Mammary epithelial cell (primary cell): ENCODE measurements at regions of chr12 and their contacts with region 1.

Region 1: GRCh38 chr12:66693901-66694675 is 15.2 kb upstream of the GRIP1 start:
- DNase-seq: peak; percentile 49
- H3K4me3 ChIP-seq: no peak overlapping the region
- H3K27ac ChIP-seq: no peak overlapping the region
- H3K4me1 ChIP-seq: no peaks in the 10 kb centered on the region
- H3K27me3 ChIP-seq: no peaks in the 10 kb centered on the region
- CTCF ChIP-seq: peak; percentile 47 to 68

Region 2: DNA sequence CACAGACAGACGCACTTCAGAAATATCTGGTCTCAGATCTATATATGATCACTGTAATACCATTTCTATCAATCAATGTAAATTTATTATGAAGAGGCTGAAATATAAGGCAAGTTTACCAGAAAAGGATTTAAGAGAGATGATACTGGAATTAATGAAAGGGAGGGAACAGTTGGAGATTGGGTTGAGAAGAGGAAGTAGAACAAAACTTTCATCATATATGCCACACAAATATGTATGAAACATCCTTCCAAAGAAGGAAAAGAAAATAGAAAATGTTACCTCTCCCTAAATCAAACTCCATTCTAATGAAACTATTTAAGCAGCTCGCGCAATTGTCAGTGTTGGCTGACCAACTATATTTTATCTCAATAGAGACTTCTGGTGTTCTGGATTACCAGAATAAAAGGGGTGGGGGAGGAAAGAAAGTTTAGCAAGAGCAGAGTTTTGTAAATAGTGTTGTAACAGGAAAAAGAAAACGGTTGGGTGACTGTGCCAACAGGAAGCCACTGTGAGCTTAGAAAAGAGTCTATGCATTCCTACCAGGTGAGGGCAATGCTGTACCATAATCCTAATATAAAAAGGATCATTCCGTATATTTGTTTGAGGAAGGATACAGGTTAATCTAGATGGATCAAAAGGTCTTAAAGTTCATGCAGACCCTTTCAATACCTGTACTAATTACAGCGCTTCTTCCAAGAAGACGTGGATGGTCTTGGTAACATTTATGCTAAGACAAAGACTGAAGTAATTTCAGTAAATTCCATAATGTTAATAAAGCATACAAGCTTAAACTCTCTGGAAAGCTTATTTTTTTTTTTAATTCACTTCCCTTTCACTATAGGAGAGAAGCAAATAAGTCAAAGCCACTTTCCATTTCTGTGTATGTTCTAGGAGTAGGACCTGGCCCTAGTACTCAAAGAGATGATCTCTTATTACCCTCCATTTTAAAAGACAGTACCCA is 549.0 kb before region 1 on chr12:
- CTCF ChIA-PET with region 1: no interaction called
- dilution Hi-C with region 1: no loop called
- in situ Hi-C with region 1: no loop called
- intact Hi-C with region 1: loop called (anchors 5 kb)
- DNase-seq: peak; percentile 55
- H3K4me3 ChIP-seq: no peak overlapping the region
- H3K27ac ChIP-seq: no peak overlapping the region
- H3K4me1 ChIP-seq: no peaks in the 10 kb centered on the region
- H3K27me3 ChIP-seq: no peaks in the 10 kb centered on the region
- CTCF ChIP-seq: peak; percentile 76

Region 3: DNA sequence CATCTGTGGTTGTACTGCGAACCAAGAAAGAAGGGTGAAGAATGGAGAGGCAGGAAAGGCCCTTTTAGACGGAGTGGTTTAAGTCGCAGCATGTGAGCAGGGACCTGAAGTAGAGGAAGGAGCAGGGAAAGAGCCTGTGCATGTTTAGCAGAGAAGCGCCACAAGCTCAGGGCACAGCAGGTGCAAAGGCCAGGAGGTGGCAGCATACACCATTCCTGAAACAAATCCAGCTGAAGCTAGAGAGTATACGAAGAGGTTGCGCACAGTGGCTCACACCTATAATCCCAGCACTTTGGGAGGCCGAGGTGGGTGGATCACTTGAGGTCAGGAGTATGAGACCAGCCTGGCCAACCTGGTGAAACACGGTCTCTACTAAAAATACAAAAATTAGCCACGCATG is 341.9 kb before region 1 on chr12:
- CTCF ChIA-PET with region 1: no interaction called
- dilution Hi-C with region 1: no loop called
- in situ Hi-C with region 1: no loop called
- intact Hi-C with region 1: loop called (anchors 1 kb)
- DNase-seq: no peak
- H3K4me3 ChIP-seq: no peak overlapping the region
- H3K27ac ChIP-seq: no peak overlapping the region
- H3K4me1 ChIP-seq: no peaks in the 10 kb centered on the region
- H3K27me3 ChIP-seq: no peaks in the 10 kb centered on the region
- CTCF ChIP-seq: peak; percentile 36 to 41

Region 4: GRCh38 chr12:66647034-66647691 is 46.9 kb before region 1 on chr12:
- CTCF ChIA-PET with region 1: no interaction called
- dilution Hi-C with region 1: no loop called
- in situ Hi-C with region 1: no loop called
- intact Hi-C with region 1: no loop called
- DNase-seq: peak; percentile 94
- H3K4me3 ChIP-seq: peak overlapping the region in 1 of 3 experiments; percentile 28
- H3K27ac ChIP-seq: peak overlapping the region; percentile 63
- H3K4me1 ChIP-seq: peaks cover 24% of the 10 kb centered on the region
- H3K27me3 ChIP-seq: no peaks in the 10 kb centered on the region
- CTCF ChIP-seq: no peak

Region 5: DNA sequence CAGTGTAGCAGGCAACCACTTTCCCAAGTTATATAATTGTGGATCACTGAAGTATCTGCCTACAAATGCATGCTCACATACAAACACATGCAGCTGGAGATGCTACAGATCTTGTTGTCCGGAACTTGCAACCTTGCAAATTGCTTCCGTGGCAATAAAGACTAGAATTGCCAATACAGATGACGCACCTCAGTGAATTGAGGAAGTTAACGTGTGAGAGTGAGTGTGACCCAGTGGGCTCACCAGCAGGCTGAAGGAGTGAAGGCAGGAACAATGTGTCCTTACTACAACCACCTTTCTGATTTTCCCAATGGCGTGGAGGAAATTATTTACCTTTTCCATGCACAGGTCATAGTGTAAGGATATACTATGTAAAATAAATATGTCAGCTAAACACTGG is 74.2 kb after region 1 on chr12:
- CTCF ChIA-PET with region 1: no interaction called
- dilution Hi-C with region 1: no loop called
- in situ Hi-C with region 1: no loop called
- intact Hi-C with region 1: no loop called
- DNase-seq: no peak
- H3K4me3 ChIP-seq: no peak overlapping the region
- H3K27ac ChIP-seq: no peak overlapping the region
- H3K4me1 ChIP-seq: no peaks in the 10 kb centered on the region
- H3K27me3 ChIP-seq: no peaks in the 10 kb centered on the region
- CTCF ChIP-seq: no peak